Activated CD4-positive, alpha-beta T cell treated with anti-CD3 and anti-CD28 coated beads for 36 hours (primary cell): ENCODE measurements at regions of chr21 and their contacts with region 1.

Region 1: GRCh38 chr21:31713973-31714740 is 17.8 kb downstream of the SCAF4 start:
- DNase-seq: no peak
- ATAC-seq: peak; percentile 95
- H3K4me3 Mint-ChIP-seq: no peak overlapping the region
- H3K27ac Mint-ChIP-seq: peak overlapping the region; percentile 74
- H3K4me1 Mint-ChIP-seq: peaks cover 84% of the 10 kb centered on the region
- H3K27me3 Mint-ChIP-seq: no peaks in the 10 kb centered on the region

Region 2: GRCh38 chr21:31665397-31665796 is 48.8 kb before region 1 on chr21:
- CTCF ChIA-PET with region 1: no interaction called
- POLR2A ChIA-PET with region 1: interaction called, 6 read pairs
- intact Hi-C with region 1: loop called (anchors 1 to 5 kb)
- DNase-seq: peak; percentile 71
- ATAC-seq: peak; percentile 71
- H3K4me3 Mint-ChIP-seq: peak overlapping the region; percentile 30
- H3K27ac Mint-ChIP-seq: peak overlapping the region; percentile 78
- H3K4me1 Mint-ChIP-seq: peaks cover 95% of the 10 kb centered on the region
- H3K27me3 Mint-ChIP-seq: no peaks in the 10 kb centered on the region

Region 3: GRCh38 chr21:31725202-31725839 is 11.2 kb after region 1 on chr21:
- CTCF ChIA-PET with region 1: interaction called, 3 read pairs
- POLR2A ChIA-PET with region 1: no interaction called
- intact Hi-C with region 1: loop called (anchors 1 kb)
- DNase-seq: peak; percentile 20
- ATAC-seq: peak; percentile 86
- H3K4me3 Mint-ChIP-seq: no peak overlapping the region
- H3K27ac Mint-ChIP-seq: peak overlapping the region; percentile 28
- H3K4me1 Mint-ChIP-seq: peaks cover 56% of the 10 kb centered on the region
- H3K27me3 Mint-ChIP-seq: no peaks in the 10 kb centered on the region